Activated CD4-positive, alpha-beta memory T cell treated with anti-CD3 and anti-CD28 coated beads, Interleukin-2, amount 10 ng/mL, durations not matched to agents 7 days and 5 days (primary cell): ENCODE measurements at regions of chr16 and their contacts with region 1.

Region 1: DNA sequence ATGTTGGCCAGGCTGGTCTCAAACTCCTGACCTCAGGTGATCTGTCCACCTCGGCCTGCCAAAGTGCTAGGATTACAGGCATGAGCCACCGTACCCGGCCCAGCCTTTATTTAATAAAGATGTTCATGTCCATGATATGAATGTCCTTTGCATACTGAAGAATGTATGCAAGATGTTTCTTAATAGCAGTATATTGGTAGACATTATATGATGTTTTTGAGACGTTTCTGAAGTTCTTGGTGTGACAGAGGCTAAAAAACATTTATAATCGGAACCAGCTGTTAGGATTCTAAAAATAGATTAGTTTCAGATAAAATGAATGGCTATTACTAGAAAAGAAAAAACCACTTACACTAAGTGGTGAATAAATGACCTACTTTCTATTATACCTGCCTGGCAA is 11.8 kb downstream of the PDZD9 start:
- DNase-seq: no peak
- H3K4me3 Mint-ChIP-seq: no peak overlapping the region
- H3K27ac Mint-ChIP-seq: no peak overlapping the region
- H3K4me1 Mint-ChIP-seq: peaks cover 41% of the 10 kb centered on the region
- H3K27me3 Mint-ChIP-seq: no peaks in the 10 kb centered on the region

Region 2: GRCh38 chr16:21952793-21953540 is 36.2 kb before region 1 on chr16 and contains the start of gene UQCRC2:
- CTCF ChIA-PET with region 1: no interaction called
- POLR2A ChIA-PET with region 1: interaction called, 16 read pairs
- DNase-seq: peak; percentile 87
- H3K4me3 Mint-ChIP-seq: peak within 1 kb of the TSS; percentile 97
- H3K27ac Mint-ChIP-seq: peak within 1 kb of the TSS; percentile 82
- H3K4me1 Mint-ChIP-seq: peaks cover 69% of the 10 kb centered on the region
- H3K27me3 Mint-ChIP-seq: no peaks in the 10 kb centered on the region
- total RNA-seq, gene UQCRC2: 216 to 225 TPM

Region 3: GRCh38 chr16:22109258-22109898 is 120.2 kb after region 1 on chr16:
- CTCF ChIA-PET with region 1: no interaction called
- POLR2A ChIA-PET with region 1: no interaction called
- DNase-seq: no peak
- H3K4me3 Mint-ChIP-seq: no peak overlapping the region
- H3K27ac Mint-ChIP-seq: no peak overlapping the region
- H3K4me1 Mint-ChIP-seq: no peaks in the 10 kb centered on the region
- H3K27me3 Mint-ChIP-seq: peaks cover 18% of the 10 kb centered on the region